PC-9 (cell line): ENCODE measurements at regions of chr5 and their contacts with region 1.

Region 1: DNA sequence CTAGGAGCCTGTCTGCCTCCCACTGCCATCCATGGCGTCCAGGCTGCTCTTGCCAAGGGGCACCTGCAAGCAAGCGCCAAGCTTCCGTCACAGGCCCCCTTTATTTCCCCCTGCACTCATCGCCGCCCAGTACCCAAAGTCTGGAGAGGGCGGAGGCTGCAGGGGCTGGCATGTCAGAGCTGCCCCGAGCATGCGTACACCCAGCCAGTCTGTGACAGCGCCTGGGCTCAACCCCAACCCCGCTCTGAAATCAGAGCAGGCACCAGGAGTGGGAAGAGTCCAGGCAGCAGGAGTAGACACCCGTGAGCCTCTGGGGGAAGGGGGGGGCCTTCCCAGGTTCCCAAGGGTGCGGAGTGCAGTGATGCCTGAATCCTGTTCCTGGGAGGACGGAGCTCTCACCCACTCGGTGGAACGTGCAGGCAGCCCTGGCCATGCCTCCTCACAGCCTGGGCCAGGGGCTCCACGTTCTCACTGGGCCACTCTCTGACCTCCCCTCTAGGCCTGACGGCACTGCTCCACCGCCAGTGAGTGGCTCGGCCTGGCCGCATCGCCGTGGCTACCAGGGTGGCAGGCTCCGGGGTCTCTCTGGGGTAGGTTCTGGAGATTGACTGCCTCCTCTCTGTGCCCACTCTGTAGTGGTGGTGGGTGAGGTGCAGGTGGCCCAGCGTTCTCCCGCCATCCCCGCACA is 469.0 kb downstream of the CDH9 start:
- DNase-seq: no peak
- H3K4me3 ChIP-seq: no peak overlapping the region
- H3K27ac ChIP-seq: no peak overlapping the region
- H3K4me1 ChIP-seq: no peaks in the 10 kb centered on the region
- H3K27me3 ChIP-seq: no peaks in the 10 kb centered on the region
- CTCF ChIP-seq: no peak

Region 2: GRCh38 chr5:26432386-26432785 is 137.0 kb before region 1 on chr5:
- CTCF ChIA-PET with region 1: no interaction called
- POLR2A ChIA-PET with region 1: interaction called, 10 read pairs
- intact Hi-C with region 1: no loop called
- DNase-seq: no peak
- H3K4me3 ChIP-seq: no peak overlapping the region
- H3K27ac ChIP-seq: no peak overlapping the region
- H3K4me1 ChIP-seq: no peaks in the 10 kb centered on the region
- H3K27me3 ChIP-seq: no peaks in the 10 kb centered on the region
- CTCF ChIP-seq: no peak

Region 3: DNA sequence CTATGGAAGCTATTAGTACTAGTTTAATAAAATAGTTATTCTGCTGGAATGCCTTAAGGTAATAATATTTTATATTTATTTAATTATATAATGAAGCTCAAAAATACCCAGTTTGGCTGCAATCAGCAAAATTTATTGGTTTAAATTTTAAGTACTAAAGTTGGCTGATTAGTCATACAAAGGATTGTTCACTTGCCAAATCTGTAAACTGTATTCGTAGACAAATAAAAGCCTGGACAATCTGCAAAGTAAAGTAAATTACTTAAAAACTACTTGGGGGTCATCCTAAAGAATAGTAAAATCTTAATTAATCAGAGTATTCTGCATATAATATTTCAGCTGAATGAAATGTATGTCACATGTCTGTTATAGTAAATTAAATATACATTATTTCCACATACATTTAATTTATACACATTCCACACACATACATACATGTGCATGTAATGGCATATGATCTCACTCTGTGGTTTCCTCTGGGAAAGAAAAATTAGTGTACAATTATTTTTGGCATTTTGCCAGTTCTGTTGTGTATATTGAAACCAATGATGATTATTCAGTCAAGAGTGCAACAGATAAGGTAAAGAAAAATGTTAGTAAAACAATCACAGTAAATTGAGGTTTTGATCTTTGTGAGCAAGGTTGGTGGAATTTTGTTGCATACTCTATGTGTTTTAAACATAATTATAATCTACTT is 13.1 kb after region 1 on chr5:
- CTCF ChIA-PET with region 1: no interaction called
- POLR2A ChIA-PET with region 1: no interaction called
- intact Hi-C with region 1: no loop called
- DNase-seq: no peak
- H3K4me3 ChIP-seq: no peak overlapping the region
- H3K27ac ChIP-seq: no peak overlapping the region
- H3K4me1 ChIP-seq: no peaks in the 10 kb centered on the region
- H3K27me3 ChIP-seq: no peaks in the 10 kb centered on the region
- CTCF ChIP-seq: no peak

Region 4: GRCh38 chr5:26660116-26660515 is 90.7 kb after region 1 on chr5:
- CTCF ChIA-PET with region 1: no interaction called
- POLR2A ChIA-PET with region 1: no interaction called
- intact Hi-C with region 1: no loop called
- DNase-seq: no peak
- H3K4me3 ChIP-seq: no peak overlapping the region
- H3K27ac ChIP-seq: no peak overlapping the region
- H3K4me1 ChIP-seq: no peaks in the 10 kb centered on the region
- H3K27me3 ChIP-seq: no peaks in the 10 kb centered on the region
- CTCF ChIP-seq: no peak